CD4-positive, alpha-beta T cell (primary cell): ENCODE measurements at regions of chr5 and their contacts with region 1.

Region 1: DNA sequence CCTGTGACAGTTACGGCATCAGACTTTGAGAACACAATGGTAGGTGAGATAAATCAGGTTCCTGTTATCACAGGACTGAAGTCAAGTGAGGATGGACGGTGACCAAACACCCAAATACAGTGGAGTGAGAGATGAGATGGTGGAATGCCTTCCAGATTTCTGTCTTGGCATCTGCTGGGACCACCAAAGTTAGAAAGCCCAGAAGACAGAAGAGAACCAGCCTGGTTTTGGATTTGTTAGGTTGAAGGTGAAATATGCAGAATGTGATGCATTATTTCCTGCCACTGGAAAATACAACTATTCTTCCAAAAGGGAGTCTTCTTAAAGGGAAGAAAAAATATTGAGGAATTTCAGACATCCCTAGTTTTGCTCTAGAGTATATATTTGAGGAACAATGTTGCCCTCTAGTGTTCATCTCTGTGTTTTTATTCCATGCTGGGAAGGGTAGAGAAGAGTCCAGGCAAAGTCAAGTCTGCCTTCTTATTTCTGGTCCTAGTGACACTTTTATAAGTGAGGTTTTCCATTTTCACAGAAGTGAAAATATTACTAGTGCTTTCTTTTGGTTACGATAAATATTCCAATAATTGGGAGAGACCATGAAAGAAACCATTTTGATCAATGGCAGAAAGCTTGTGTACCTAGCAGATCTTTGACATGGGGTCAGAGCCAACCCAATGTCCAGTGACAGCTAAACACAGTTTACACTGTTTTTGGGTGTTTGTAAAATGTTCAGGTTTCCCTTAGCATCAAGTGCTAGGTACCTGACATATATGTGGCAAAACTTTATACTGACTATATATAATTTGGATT is 142.3 kb upstream of the ANKH start:
- DNase-seq: peak in 3 of 14 experiments; percentile 52 to 59 (median 57)
- ATAC-seq: peak; percentile 55
- H3K4me3 ChIP-seq: no peak overlapping the region
- H3K4me3 Mint-ChIP-seq: no peak overlapping the region
- H3K27ac ChIP-seq: no peak overlapping the region
- H3K27ac Mint-ChIP-seq: no peak overlapping the region
- H3K4me1 ChIP-seq: no peaks in the 10 kb centered on the region
- H3K4me1 Mint-ChIP-seq: no peaks in the 10 kb centered on the region
- H3K27me3 ChIP-seq: no peaks in the 10 kb centered on the region
- H3K27me3 Mint-ChIP-seq: no peaks in the 10 kb centered on the region
- CTCF ChIP-seq: peak; percentile 85

Region 2: GRCh38 chr5:14357851-14358250 is 656.0 kb before region 1 on chr5:
- CTCF ChIA-PET with region 1: no interaction called
- POLR2A ChIA-PET with region 1: no interaction called
- intact Hi-C with region 1: loop called (anchors 5 kb)
- DNase-seq: no peak
- ATAC-seq: no peak
- H3K4me3 ChIP-seq: no peak overlapping the region
- H3K4me3 Mint-ChIP-seq: no peak overlapping the region
- H3K27ac ChIP-seq: no peak overlapping the region
- H3K27ac Mint-ChIP-seq: no peak overlapping the region
- H3K4me1 ChIP-seq: no peaks in the 10 kb centered on the region
- H3K4me1 Mint-ChIP-seq: no peaks in the 10 kb centered on the region
- H3K27me3 ChIP-seq: peaks cover 0 to 4% of the 10 kb centered on the region in 2 experiments
- H3K27me3 Mint-ChIP-seq: no peaks in the 10 kb centered on the region
- CTCF ChIP-seq: no peak

Region 3: GRCh38 chr5:14364576-14365472 is 649.0 kb before region 1 on chr5:
- CTCF ChIA-PET with region 1: no interaction called
- POLR2A ChIA-PET with region 1: no interaction called
- intact Hi-C with region 1: loop called in 1 of 2 experiments (anchors 5 kb)
- DNase-seq: peak in 6 of 14 experiments; percentile 5 to 31 (median 14)
- ATAC-seq: no peak
- H3K4me3 ChIP-seq: no peak overlapping the region
- H3K4me3 Mint-ChIP-seq: no peak overlapping the region
- H3K27ac ChIP-seq: no peak overlapping the region
- H3K27ac Mint-ChIP-seq: no peak overlapping the region
- H3K4me1 ChIP-seq: peaks cover 17% of the 10 kb centered on the region
- H3K4me1 Mint-ChIP-seq: peaks cover 36% of the 10 kb centered on the region
- H3K27me3 ChIP-seq: peaks cover 0 to 4% of the 10 kb centered on the region in 2 experiments
- H3K27me3 Mint-ChIP-seq: no peaks in the 10 kb centered on the region
- CTCF ChIP-seq: no peak

Region 4: GRCh38 chr5:14946815-14947640 is 66.8 kb before region 1 on chr5:
- CTCF ChIA-PET with region 1: interaction called, 4 read pairs
- POLR2A ChIA-PET with region 1: no interaction called
- intact Hi-C with region 1: loop called in 1 of 2 experiments (anchors 2 kb)
- DNase-seq: peak in 11 of 14 experiments; percentile 7 to 79 (median 25)
- ATAC-seq: peak; percentile 99
- H3K4me3 ChIP-seq: no peak overlapping the region
- H3K4me3 Mint-ChIP-seq: no peak overlapping the region
- H3K27ac ChIP-seq: no peak overlapping the region
- H3K27ac Mint-ChIP-seq: no peak overlapping the region
- H3K4me1 ChIP-seq: no peaks in the 10 kb centered on the region
- H3K4me1 Mint-ChIP-seq: peaks cover 8% of the 10 kb centered on the region
- H3K27me3 ChIP-seq: no peaks in the 10 kb centered on the region
- H3K27me3 Mint-ChIP-seq: peaks cover 14% of the 10 kb centered on the region
- CTCF ChIP-seq: peak; percentile 58

Region 5: DNA sequence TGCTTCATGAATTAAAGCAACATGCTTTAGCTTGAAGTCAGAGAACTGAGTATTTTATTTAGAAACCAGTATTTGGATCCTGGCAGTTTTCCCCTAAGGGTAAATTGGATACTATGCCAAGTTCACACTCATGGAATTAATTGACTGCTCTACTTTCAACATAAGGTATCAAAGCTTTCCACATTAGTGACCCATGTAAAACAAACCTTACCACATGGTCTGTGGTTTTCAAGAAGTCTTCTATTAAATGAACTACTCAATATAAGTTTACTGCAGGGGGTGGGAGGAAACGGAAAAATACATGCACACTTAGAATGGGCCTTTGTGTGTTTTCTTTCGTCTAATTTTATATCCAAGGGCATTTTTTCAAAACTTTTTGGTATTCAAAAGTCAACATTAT is 254.1 kb after region 1 on chr5:
- CTCF ChIA-PET with region 1: no interaction called
- POLR2A ChIA-PET with region 1: no interaction called
- intact Hi-C with region 1: no loop called
- DNase-seq: no peak
- ATAC-seq: no peak
- H3K4me3 ChIP-seq: no peak overlapping the region
- H3K4me3 Mint-ChIP-seq: no peak overlapping the region
- H3K27ac ChIP-seq: no peak overlapping the region
- H3K27ac Mint-ChIP-seq: no peak overlapping the region
- H3K4me1 ChIP-seq: no peaks in the 10 kb centered on the region
- H3K4me1 Mint-ChIP-seq: no peaks in the 10 kb centered on the region
- H3K27me3 ChIP-seq: no peaks in the 10 kb centered on the region
- H3K27me3 Mint-ChIP-seq: no peaks in the 10 kb centered on the region
- CTCF ChIP-seq: no peak

Region 6: GRCh38 chr5:15483351-15484097 is 469.7 kb after region 1 on chr5:
- CTCF ChIA-PET with region 1: no interaction called
- POLR2A ChIA-PET with region 1: no interaction called
- intact Hi-C with region 1: no loop called
- DNase-seq: no peak
- ATAC-seq: no peak
- H3K4me3 ChIP-seq: no peak overlapping the region
- H3K4me3 Mint-ChIP-seq: no peak overlapping the region
- H3K27ac ChIP-seq: no peak overlapping the region
- H3K27ac Mint-ChIP-seq: no peak overlapping the region
- H3K4me1 ChIP-seq: no peaks in the 10 kb centered on the region
- H3K4me1 Mint-ChIP-seq: no peaks in the 10 kb centered on the region
- H3K27me3 ChIP-seq: no peaks in the 10 kb centered on the region
- H3K27me3 Mint-ChIP-seq: no peaks in the 10 kb centered on the region
- CTCF ChIP-seq: no peak